Lower leg skin (tissue), 4 donors: ENCODE measurements at regions of chr3 and their contacts with region 1.

Region 1: GRCh38 chr3:132730891-132731580 is 8.8 kb upstream of the NPHP3 start:
- DNase-seq: no peak
- H3K4me3 ChIP-seq: no peak overlapping the region
- CTCF ChIP-seq: no peak
- POLR2A ChIP-seq: no peak

Region 2: DNA sequence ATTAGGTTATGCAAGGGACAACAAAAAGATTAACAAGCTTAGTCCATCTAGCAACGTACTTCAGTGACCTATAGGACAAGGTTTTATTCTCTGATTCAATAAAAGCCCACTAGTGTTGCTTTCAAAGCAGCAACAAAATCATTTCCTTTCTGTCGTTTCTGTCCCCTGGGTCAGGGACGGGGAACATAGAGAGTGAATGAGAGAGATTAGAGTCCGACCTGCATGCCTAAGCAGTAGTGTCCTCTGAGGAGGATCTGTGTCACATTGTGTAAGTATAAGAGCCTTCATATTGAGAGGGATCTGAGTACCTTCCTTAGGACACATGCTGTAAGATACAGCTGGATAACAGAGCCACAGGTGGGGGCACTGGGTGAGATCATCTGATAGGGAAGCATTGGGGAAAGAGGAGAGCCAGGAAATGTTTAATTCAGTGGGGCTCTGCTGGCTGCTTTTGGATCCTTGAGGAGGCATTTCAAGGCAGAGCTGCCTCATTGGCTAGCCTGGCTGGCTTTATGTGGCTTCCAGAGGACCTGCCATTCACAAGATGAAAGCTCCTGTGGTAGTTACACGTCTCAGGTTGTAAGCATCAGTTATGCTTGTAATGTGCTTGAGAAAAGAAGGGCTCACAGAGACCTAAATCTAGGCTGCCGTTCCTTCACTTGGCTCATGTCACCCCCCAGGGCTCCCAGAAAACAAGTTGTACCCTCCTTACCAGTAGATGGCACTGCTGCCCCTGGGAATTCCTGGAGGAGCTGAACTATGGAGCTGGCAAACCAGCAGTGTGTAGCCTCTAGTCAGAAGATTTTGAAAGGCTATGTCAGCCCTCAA is 309.9 kb after region 1 on chr3:
- intact Hi-C with region 1: loop called (anchors 5 kb)
- DNase-seq: peak; percentile 56 to 89
- H3K4me3 ChIP-seq: no peak overlapping the region
- CTCF ChIP-seq: peak in 1 of 3 donors; percentile 21
- POLR2A ChIP-seq: no peak

Region 3: DNA sequence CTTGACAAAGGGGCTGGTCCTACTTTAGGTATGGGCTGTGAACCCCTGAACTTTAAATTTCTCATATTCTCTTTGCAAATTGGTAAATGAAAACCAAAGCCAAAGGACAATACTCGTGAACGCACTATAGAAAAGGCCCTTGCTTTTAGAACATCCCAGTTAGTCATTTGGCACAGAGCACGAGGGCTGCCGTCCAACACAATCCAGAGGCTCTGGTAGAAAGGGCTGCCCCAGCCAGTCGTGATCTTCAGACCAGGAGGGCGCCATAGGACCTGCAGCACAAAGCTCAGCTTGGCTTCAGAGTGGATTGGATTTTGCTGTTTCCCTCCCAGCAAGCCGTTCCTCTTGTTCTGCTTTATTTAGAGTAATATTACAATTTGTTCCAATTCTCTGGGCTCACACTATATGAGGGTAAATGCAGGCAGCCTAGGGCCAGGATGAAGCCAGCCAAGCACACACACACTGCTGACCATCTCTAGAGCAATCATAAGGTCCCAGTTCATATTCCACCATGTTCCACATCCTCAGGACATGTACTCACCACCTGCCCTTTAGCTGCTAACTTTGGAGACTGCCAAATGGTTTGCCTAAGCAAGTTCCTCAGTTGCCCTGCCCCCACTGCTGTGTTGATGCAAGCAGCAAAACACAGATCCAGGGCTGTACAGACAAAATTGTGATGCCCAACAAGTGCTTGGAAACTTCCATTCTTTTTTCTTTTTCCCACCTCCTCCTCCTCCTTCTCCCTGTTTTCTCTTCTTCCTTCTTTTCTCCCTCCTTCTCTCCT is 662.8 kb after region 1 on chr3:
- intact Hi-C with region 1: loop called (anchors 10 kb)
- DNase-seq: no peak
- H3K4me3 ChIP-seq: no peak overlapping the region
- CTCF ChIP-seq: no peak
- POLR2A ChIP-seq: no peak

Region 4: DNA sequence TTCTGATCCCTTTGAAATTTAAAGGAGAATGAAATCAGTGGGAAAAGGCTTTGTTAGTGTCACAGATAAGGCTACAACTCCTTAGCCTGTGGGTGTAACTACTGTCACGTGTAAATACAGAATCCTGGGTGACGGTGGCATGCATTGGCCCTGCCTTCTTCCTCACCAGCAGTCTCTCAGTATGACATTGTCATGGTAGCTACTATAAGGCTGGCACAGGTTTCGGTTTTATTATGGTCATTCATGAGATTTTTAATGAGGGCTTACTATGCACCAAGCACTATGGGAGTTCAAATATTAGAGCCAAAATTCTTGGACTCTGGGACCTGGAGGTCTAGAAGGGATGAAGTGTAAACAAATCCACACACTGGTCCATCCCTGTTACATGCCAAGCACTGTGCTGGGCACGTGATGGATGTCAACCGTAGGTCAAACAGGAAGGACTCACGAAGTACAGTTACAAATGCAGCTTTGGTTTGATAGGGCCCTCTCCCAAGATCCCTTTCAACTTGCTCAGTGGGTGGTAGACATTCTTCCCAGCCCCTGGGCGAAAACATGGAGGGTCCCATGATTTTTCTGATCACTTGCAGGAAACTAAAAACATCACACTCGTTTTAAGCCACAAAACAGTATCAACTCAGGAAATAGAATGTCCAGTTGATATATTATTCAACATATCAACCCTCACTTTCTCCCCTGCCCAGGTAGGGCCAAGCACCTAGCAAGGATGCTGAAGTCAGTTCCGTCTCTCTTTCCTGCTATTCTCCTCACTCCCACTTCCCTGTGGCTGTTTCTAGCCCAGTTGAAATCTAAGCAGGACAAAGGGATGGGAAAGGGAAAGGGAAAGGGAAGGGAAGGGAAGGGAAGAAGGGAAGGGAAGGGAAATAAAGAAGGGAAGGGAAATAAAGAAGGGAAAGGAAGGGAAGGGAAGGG is 694.2 kb after region 1 on chr3:
- intact Hi-C with region 1: loop called (anchors 5 kb)
- DNase-seq: no peak
- H3K4me3 ChIP-seq: no peak overlapping the region
- CTCF ChIP-seq: no peak
- POLR2A ChIP-seq: no peak